SK-N-SH (cell line): ENCODE measurements at regions of chr14 and their contacts with region 1.

Region 1: GRCh38 chr14:100025111-100025510 is 40.1 kb upstream of the EVL start:
- DNase-seq: peak; percentile 56
- H3K4me3 ChIP-seq: no peak overlapping the region
- H3K27ac ChIP-seq: no peak overlapping the region
- H3K4me1 ChIP-seq: peaks cover 2 to 15% of the 10 kb centered on the region in 2 experiments; a peak in 3 of 4 replicates
- H3K27me3 ChIP-seq: no peaks in the 10 kb centered on the region
- CTCF ChIP-seq: peak; percentile 52
- EP300 ChIP-seq: no peak
- RAD21 ChIP-seq: peak; percentile 68

Region 2: GRCh38 chr14:100037353-100037752 is 12.2 kb after region 1 on chr14:
- CTCF ChIA-PET with region 1: interaction called, 14 read pairs
- POLR2A ChIA-PET with region 1: interaction called, 3 read pairs
- DNase-seq: no peak
- H3K4me3 ChIP-seq: no peak overlapping the region
- H3K27ac ChIP-seq: peak overlapping the region; percentile 6 to 41; a peak in 2 of 4 replicates
- H3K4me1 ChIP-seq: peaks cover 12 to 14% of the 10 kb centered on the region in 2 experiments; a peak in 3 of 4 replicates
- H3K27me3 ChIP-seq: no peaks in the 10 kb centered on the region
- CTCF ChIP-seq: no peak
- EP300 ChIP-seq: no peak
- RAD21 ChIP-seq: no peak